ENCODE measurements at regions of chr16 and their contacts with region 1.

Region 1: DNA sequence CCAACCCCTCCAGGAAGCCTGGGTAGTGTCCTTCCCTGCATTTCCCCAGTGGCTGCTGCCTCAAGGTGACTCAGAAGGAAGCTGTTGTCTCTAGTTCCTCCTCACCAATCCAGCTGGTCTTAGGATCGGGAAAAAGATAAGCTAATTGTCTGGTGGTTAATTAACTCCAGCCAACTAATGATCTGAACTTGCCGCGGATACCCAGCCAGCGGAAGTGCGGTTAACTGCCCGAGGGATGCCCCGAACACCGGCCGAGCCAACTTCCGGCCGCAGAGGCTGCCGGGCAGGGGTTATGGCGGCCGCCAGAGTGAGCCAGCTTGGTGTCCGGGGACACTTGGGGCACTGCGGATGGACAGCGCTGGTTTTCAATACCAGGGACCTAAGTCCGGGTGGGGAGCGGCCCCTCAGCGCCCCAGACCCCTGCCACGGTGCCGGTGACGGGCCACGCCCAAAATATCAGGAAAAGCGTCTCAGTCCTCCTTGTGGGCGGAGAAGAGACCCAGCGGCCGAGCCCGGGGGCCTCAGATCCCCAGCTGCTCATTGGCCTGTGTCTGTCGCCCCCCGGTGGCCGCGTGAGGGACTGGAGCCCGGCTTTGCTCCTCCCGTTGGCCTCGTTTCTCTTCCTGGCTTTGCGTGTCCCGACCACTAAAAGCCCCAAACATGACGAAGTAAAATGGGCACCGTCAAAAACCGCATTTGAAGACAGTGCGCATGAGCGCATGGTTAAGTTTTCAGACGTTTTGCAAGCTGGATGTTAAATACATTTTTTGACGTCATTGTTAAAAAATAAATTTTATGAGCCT is 10.2 kb upstream of the PRSS22 start:
- DNase-seq: peak; percentile 92 to 96
- H3K4me3 ChIP-seq: peak overlapping the region; percentile 41
- H3K4me3 Mint-ChIP-seq: peak overlapping the region; percentile 90
- H3K27ac Mint-ChIP-seq: peak overlapping the region; percentile 91
- H3K4me1 ChIP-seq: no peaks in the 10 kb centered on the region
- H3K4me1 Mint-ChIP-seq: no peaks in the 10 kb centered on the region
- H3K27me3 ChIP-seq: no peaks in the 10 kb centered on the region
- H3K27me3 Mint-ChIP-seq: peaks cover 3% of the 10 kb centered on the region
- CTCF ChIP-seq: peak; percentile 86 to 92

Region 2: DNA sequence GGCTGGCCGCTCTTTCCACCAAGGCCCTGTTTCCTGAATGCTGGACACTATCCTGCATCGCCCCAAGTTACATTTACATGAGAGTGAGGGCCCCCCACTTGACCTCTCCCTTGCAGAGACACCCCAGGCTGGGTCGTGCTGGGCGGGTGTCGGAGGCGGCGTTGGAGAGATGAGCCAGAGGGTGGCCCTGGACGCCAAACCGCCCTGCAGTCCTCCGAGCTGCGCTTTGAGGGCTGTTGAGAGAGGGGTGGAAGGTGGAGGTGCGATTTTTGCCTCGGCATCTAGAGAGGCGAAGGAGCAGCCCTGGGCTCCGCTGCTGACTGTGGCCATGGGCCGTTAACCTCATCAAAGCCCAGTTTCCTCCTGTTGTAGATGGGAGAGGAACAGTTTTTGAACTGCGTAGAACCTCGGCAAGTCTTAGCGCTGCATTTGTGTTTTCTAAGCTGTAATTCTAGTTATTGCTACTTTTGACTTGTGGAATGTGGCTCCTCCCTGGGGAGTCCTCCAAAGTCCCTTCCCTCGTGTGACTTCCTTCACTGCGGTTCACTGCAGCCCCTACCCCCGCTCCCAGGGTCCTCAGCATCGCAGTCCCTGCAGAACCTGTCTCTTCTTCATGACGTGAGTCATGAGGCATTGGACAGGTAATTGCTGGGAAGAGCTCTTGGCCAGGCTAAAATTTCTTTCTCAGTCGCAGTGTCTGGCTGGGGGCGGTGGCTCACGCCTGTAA is 90.1 kb before region 1 on chr16:
- CTCF ChIA-PET with region 1: interaction called, 4 read pairs
- POLR2A ChIA-PET with region 1: interaction called, 4 read pairs
- intact Hi-C with region 1: loop called (anchors 1 kb)
- DNase-seq: peak in 1 of 2 experiments; percentile 48
- H3K4me3 ChIP-seq: peak overlapping the region; percentile 76
- H3K4me3 Mint-ChIP-seq: peak overlapping the region; percentile 89
- H3K27ac Mint-ChIP-seq: peak overlapping the region; percentile 92
- H3K4me1 ChIP-seq: peaks cover 15% of the 10 kb centered on the region
- H3K4me1 Mint-ChIP-seq: peaks cover 1% of the 10 kb centered on the region
- H3K27me3 ChIP-seq: no peaks in the 10 kb centered on the region
- H3K27me3 Mint-ChIP-seq: no peaks in the 10 kb centered on the region
- CTCF ChIP-seq: no peak

Region 3: DNA sequence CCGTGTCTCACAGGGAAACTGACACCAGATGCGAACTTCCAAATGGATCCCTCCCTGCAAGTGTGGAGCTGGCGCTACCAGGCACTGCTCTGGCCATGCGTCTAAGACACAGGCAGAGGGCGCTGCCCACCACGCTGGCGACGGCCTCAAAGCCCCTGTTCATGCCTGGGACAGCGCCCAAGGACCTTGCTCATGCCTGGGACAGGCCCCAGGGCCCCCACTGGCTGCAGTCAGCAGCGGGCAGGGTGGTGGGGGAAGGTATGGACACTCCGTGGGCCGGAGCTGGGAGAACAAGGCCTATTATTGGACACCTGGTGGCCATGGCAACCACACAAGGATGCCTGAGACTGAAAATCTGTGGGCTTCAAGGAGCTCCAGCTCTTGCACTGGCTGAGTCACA is 29.3 kb before region 1 on chr16:
- CTCF ChIA-PET with region 1: interaction called, 35 read pairs
- POLR2A ChIA-PET with region 1: no interaction called
- intact Hi-C with region 1: loop called (anchors 1 kb)
- DNase-seq: peak; percentile 73 to 74
- H3K4me3 ChIP-seq: no peak overlapping the region
- H3K4me3 Mint-ChIP-seq: no peak overlapping the region
- H3K27ac Mint-ChIP-seq: peak overlapping the region; percentile 63
- H3K4me1 ChIP-seq: peaks cover 20% of the 10 kb centered on the region
- H3K4me1 Mint-ChIP-seq: peaks cover 25% of the 10 kb centered on the region
- H3K27me3 ChIP-seq: no peaks in the 10 kb centered on the region
- H3K27me3 Mint-ChIP-seq: no peaks in the 10 kb centered on the region
- CTCF ChIP-seq: peak; percentile 65 to 70

Region 4: DNA sequence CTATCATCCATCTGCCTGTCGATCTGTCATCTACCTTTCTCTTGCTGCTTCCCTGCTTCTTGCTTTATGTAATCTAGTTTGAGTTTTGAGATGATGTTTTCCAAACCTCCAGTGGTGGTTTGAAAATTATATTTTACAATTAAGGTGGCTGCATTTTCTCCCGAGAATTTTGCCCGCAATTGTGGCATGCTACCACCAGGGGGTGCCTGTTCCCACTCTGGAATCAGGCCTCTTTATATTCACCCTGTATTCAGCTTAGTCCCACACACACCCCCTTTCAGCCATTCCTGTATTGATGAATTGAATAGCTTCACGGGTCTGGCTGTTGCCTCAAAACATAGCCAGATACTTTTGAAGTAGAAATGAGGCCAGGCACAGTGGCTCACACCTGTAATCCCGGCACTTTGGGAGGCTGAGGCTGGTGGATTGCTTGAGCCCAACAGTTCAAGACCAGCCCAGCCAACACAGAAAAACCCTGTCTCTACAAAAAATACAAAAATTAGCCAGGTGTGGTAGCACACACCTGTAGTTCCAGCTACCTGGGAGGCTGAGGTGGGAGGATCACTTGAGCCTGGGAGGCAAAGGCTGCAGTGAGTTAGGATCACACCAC is 13.4 kb before region 1 on chr16:
- CTCF ChIA-PET with region 1: interaction called, 11 read pairs
- POLR2A ChIA-PET with region 1: no interaction called
- intact Hi-C with region 1: loop called (anchors 1 kb)
- DNase-seq: no peak
- H3K4me3 ChIP-seq: no peak overlapping the region
- H3K4me3 Mint-ChIP-seq: peak overlapping the region; percentile 20
- H3K27ac Mint-ChIP-seq: peak overlapping the region; percentile 87
- H3K4me1 ChIP-seq: peaks cover 10% of the 10 kb centered on the region; the same call in 1 of the 2 replicates
- H3K4me1 Mint-ChIP-seq: peaks cover 15% of the 10 kb centered on the region
- H3K27me3 ChIP-seq: no peaks in the 10 kb centered on the region
- H3K27me3 Mint-ChIP-seq: no peaks in the 10 kb centered on the region
- CTCF ChIP-seq: peak; percentile 69 to 82

Region 5: GRCh38 chr16:3158471-3159314 is 290.5 kb after region 1 on chr16:
- CTCF ChIA-PET with region 1: no interaction called
- POLR2A ChIA-PET with region 1: no interaction called
- intact Hi-C with region 1: no loop called
- DNase-seq: peak; percentile 92 to 96
- H3K4me3 ChIP-seq: peak overlapping the region; percentile 49
- H3K4me3 Mint-ChIP-seq: peak overlapping the region; percentile 93
- H3K27ac Mint-ChIP-seq: peak overlapping the region; percentile 91
- H3K4me1 ChIP-seq: no peaks in the 10 kb centered on the region
- H3K4me1 Mint-ChIP-seq: no peaks in the 10 kb centered on the region
- H3K27me3 ChIP-seq: no peaks in the 10 kb centered on the region
- H3K27me3 Mint-ChIP-seq: no peaks in the 10 kb centered on the region
- CTCF ChIP-seq: no peak

Measured in Caco-2 (cell line).